K562 (cell line): ENCODE measurements at regions of chr13 and their contacts with region 1.

Region 1: DNA sequence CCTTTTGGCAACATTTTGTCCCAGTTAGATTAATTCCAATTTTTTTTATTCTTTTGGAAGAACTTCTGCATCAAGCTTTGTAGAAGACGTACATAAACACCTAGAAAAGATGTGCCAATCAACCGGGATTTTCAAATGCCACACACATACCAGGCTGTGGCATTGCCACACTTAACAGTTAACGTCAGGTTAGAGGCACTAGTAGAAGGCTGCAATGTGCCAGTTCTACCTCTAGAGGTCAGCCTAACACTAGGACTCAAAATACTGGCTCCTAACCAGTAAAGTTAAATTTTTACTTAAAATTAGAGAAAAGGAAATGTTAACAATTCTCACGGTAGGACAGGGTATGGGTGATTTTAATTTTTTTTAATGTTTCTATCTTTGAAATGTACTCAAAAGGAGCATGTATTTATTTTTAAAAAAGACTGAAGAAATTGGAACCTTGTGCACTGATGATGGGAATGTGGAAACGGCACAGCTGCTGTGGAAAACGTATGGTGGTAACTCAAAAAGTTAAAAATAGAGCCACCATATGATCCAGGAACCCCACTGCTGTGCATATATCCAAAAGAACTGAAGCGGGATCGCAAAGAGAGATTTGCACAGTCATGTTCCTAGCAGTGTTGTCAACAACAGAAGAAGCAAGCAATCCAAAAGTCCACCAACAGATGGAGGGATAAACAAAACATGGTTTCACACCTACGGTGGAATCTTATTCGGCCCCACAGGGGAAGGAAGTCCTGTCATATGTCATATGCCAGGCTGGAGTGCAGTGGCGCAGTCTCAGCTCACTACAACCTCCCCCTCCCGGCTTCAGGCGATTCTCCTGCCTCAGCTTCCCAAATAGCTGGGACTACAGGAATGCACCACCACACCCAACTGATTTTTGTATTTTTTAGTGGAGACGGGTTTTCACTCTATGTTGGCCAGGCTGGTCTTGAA is 30.3 kb downstream of the CRYL1 start:
- DNase-seq: peak; percentile 50 to 57 (median 53)
- ATAC-seq: peak; percentile 77
- H3K4me3 ChIP-seq: no peak overlapping the region
- H3K27ac ChIP-seq: no peak overlapping the region; the same call in 2 of the 3 replicates
- H3K4me1 ChIP-seq: peaks cover 0 to 6% of the 10 kb centered on the region in 2 experiments; a peak in 2 of 5 replicates
- H3K27me3 ChIP-seq: no peaks in the 10 kb centered on the region
- CTCF ChIP-seq: peak; percentile 67 to 82 (median 73)
- EP300 ChIP-seq: no peak
- POLR2A ChIP-seq: no peak
- RAD21 ChIP-seq: peak; percentile 79 to 83

Region 2: DNA sequence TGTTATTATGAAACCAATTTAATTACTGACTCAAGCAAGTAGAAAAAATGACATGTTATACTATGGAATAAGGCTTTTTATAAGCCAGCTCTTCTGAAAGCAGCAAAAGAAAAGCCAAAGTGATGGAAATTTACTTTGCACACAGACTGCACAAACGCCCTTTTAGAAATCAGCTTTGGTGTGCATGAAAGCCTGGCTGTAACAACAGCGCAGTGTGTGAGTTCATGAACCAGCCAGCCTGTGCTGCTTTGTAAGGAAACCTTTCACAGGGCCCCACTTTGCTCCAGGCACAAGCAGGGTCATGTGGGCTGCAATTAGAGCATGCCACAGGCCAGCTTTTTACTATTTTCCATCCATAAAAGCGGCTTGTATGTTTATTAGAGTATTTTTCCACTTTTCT is 58.0 kb after region 1 on chr13:
- CTCF ChIA-PET with region 1: no interaction called
- POLR2A ChIA-PET with region 1: no interaction called
- in situ Hi-C with region 1: no loop called
- intact Hi-C with region 1: loop called (anchors 5 kb)
- DNase-seq: no peak
- ATAC-seq: no peak
- H3K4me3 ChIP-seq: no peak overlapping the region
- H3K27ac ChIP-seq: no peak overlapping the region
- H3K4me1 ChIP-seq: no peaks in the 10 kb centered on the region
- H3K27me3 ChIP-seq: no peaks in the 10 kb centered on the region
- CTCF ChIP-seq: no peak
- EP300 ChIP-seq: no peak
- POLR2A ChIP-seq: no peak
- RAD21 ChIP-seq: no peak

Region 3: GRCh38 chr13:20713751-20714150 is 218.4 kb after region 1 on chr13:
- CTCF ChIA-PET with region 1: interaction called, 6 read pairs
- POLR2A ChIA-PET with region 1: no interaction called
- in situ Hi-C with region 1: loop called (anchors 5 kb)
- intact Hi-C with region 1: loop called (anchors 2 kb)
- DNase-seq: no peak
- ATAC-seq: no peak
- H3K4me3 ChIP-seq: no peak overlapping the region
- H3K27ac ChIP-seq: no peak overlapping the region
- H3K4me1 ChIP-seq: peaks cover 2 to 9% of the 10 kb centered on the region in 2 experiments; a peak in 4 of 5 replicates
- H3K27me3 ChIP-seq: peaks cover 0 to 7% of the 10 kb centered on the region in 2 experiments; a peak in 2 of 5 replicates
- CTCF ChIP-seq: no peak
- EP300 ChIP-seq: no peak
- POLR2A ChIP-seq: no peak
- RAD21 ChIP-seq: no peak

Region 4: GRCh38 chr13:20828539-20829364 is 333.4 kb after region 1 on chr13:
- CTCF ChIA-PET with region 1: interaction called, 9 read pairs
- POLR2A ChIA-PET with region 1: no interaction called
- in situ Hi-C with region 1: loop called (anchors 10 kb)
- intact Hi-C with region 1: loop called (anchors 2 kb)
- DNase-seq: peak in 2 of 4 experiments; percentile 22 to 47
- ATAC-seq: peak; percentile 59; the same call in 2 of the 3 replicates
- H3K4me3 ChIP-seq: no peak overlapping the region
- H3K27ac ChIP-seq: no peak overlapping the region
- H3K4me1 ChIP-seq: no peaks in the 10 kb centered on the region
- H3K27me3 ChIP-seq: no peaks in the 10 kb centered on the region
- CTCF ChIP-seq: peak; percentile 53 to 61 (median 57); a peak in 5 of 6 replicates
- EP300 ChIP-seq: no peak
- POLR2A ChIP-seq: no peak
- RAD21 ChIP-seq: peak; percentile 55 to 63

Region 5: DNA sequence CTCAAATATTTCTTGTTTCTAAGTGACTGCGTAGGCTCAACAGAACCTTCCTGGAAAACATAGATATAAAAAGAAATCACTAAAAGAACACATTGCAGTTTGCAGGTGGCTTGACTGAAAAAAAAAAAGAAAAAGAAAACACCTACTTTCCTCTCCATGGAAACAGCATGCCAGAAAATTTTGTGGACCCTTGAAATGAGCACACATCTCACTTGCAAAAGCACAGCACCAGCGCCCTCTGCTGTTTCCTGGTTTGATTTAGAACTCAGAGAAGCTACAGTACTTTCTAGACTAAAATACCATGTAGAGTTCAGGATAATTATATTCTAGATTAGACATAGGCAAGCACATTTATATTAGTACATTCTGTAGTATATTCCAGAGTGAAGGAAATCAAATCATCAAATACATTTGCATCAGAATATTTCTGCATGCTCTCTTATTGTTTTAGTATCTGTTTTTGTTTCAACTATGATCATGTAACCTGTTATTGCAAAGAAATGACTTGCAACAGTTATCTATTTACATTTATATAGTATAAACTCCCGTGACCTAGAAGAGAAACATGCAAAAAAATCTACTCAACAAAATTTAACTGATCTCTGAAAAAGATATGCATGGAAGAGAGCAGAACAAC is 429.5 kb after region 1 on chr13:
- CTCF ChIA-PET with region 1: interaction called, 31 read pairs
- POLR2A ChIA-PET with region 1: no interaction called
- in situ Hi-C with region 1: loop called (anchors 5 kb)
- intact Hi-C with region 1: loop called (anchors 1 kb)
- DNase-seq: peak; percentile 26 to 82 (median 33)
- ATAC-seq: peak; percentile 87
- H3K4me3 ChIP-seq: no peak overlapping the region
- H3K27ac ChIP-seq: no peak overlapping the region
- H3K4me1 ChIP-seq: no peaks in the 10 kb centered on the region
- H3K27me3 ChIP-seq: no peaks in the 10 kb centered on the region
- CTCF ChIP-seq: peak; percentile 62 to 77 (median 70)
- EP300 ChIP-seq: no peak
- POLR2A ChIP-seq: no peak
- RAD21 ChIP-seq: peak; percentile 61 to 83

Region 6: DNA sequence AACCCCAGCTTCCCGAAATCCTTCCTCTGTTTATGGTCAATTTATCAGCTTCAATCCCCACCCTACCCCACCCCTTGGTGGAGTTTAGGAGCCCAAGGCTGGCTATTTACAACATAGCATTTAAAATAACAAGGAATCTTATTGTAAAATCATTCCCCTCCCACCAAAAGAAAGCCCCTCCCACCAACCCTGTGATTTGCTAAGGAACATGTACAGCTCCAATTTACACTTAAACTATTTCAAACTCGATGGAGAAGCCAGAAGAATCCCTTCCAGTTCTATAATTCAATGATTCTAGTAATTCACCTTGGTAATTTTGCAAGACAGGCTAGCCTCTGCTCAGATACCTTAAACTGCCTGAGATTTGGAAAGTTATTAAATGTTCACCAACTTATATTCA is 563.0 kb after region 1 on chr13:
- CTCF ChIA-PET with region 1: no interaction called
- POLR2A ChIA-PET with region 1: no interaction called
- in situ Hi-C with region 1: loop called (anchors 10 kb)
- intact Hi-C with region 1: no loop called
- DNase-seq: peak in 1 of 4 experiments; percentile 6
- ATAC-seq: no peak
- H3K4me3 ChIP-seq: no peak overlapping the region
- H3K27ac ChIP-seq: no peak overlapping the region
- H3K4me1 ChIP-seq: peaks cover 0 to 18% of the 10 kb centered on the region in 2 experiments; a peak in 2 of 5 replicates
- H3K27me3 ChIP-seq: no peaks in the 10 kb centered on the region; a peak in 1 of 5 replicates
- CTCF ChIP-seq: no peak
- EP300 ChIP-seq: no peak
- POLR2A ChIP-seq: no peak
- RAD21 ChIP-seq: no peak